Activated CD8-positive, alpha-beta T cell treated with anti-CD3 and anti-CD28 coated beads for 36 hours (primary cell): ENCODE measurements at regions of chr7 and their contacts with region 1.

Region 1: GRCh38 chr7:100705753-100706671 is at the start of gene POP7:
- DNase-seq: peak; percentile 100
- ATAC-seq: peak; percentile 96
- H3K4me3 Mint-ChIP-seq: peak within 1 kb of the TSS; percentile 97
- H3K27ac Mint-ChIP-seq: peak within 1 kb of the TSS; percentile 93
- H3K4me1 Mint-ChIP-seq: peaks cover 6% of the 10 kb centered on the region
- H3K27me3 Mint-ChIP-seq: no peaks in the 10 kb centered on the region
- CTCF ChIP-seq: no peak
- total RNA-seq, gene POP7: 47.4 to 48.1 TPM

Region 2: DNA sequence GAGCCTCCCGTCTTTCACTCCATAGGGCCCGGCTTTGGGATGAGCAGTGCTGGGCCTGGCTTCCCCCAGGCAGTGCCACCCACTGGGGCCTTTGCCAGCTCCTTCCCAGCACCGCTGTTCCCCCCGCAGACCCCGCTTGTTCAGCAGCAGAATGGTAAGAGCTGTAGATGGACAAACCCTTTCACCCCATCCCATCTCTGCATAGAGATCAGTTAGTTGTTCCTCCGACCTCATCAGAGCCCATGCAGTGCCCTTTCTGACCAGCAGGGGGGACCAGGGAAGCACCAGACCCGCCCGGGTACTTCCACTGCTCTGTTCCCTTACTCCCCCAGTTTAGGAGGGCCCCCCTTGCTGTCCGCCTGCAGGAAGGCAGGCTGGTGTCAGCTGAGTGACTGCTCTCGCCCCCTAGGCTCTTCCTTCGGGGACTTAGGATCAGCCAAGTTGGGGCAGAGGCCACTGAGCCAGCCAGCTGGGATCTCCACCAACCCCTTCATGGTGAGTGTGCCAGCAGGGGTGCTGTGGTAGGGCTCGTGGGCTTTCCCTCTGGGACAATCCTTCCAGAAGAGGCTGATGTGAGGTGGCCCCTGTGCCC is 142.1 kb before region 1 on chr7:
- CTCF ChIA-PET with region 1: interaction called, 12 read pairs
- POLR2A ChIA-PET with region 1: interaction called, 3 read pairs
- intact Hi-C with region 1: no loop called
- DNase-seq: peak; percentile 92
- ATAC-seq: peak; percentile 76
- H3K4me3 Mint-ChIP-seq: no peak overlapping the region
- H3K27ac Mint-ChIP-seq: no peak overlapping the region
- H3K4me1 Mint-ChIP-seq: peaks cover 26% of the 10 kb centered on the region
- H3K27me3 Mint-ChIP-seq: no peaks in the 10 kb centered on the region
- CTCF ChIP-seq: peak; percentile 95

Region 3: DNA sequence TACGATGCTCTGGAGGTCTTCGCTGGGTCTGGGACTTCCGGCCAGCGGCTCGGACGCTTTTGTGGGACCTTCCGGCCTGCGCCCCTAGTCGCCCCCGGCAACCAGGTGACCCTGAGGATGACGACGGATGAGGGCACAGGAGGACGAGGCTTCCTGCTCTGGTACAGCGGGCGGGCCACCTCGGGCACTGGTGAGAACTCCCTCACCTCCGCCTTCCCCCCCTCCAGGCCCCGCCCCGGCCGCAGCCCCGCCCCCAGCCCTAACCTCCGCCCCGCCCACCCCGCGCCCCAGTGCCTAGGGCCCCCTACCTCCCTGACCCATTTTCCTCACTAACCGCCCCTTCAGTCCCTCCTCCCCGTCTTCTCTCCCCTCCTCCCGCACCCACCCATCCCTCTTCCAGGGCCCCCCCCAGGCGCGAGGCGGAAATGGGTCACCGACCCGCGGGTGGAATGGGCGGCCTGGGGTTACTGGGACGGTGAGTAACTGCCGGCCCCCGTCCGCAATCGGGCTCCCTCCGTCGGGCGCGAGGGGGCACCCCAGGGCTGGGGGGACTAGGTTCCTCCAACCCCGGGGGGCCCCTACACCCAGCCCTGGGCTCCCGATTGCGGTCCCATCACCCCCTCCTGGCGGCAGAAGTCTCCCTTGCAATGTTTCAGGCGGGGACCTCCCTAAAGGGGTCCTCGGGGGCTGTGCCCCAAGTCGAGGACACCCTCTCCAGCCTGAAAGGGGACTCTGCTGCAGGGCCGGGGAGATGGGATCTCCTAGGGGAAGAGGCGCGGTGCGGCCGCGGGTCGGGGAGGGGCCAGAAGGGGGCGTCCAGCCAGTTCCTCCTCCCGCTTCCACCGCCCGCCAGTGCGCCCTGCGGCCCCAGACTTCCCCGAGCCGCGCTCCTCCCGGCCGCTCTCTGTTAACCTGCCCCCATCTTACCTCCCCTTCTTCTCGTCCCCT is 101.7 kb before region 1 on chr7:
- CTCF ChIA-PET with region 1: interaction called, 13 read pairs
- POLR2A ChIA-PET with region 1: interaction called, 3 read pairs
- intact Hi-C with region 1: no loop called
- DNase-seq: peak; percentile 87
- ATAC-seq: peak; percentile 81
- H3K4me3 Mint-ChIP-seq: peak overlapping the region; percentile 78
- H3K27ac Mint-ChIP-seq: peak overlapping the region; percentile 82
- H3K4me1 Mint-ChIP-seq: peaks cover 19% of the 10 kb centered on the region
- H3K27me3 Mint-ChIP-seq: peaks cover 3% of the 10 kb centered on the region
- CTCF ChIP-seq: peak; percentile 72

Region 4: DNA sequence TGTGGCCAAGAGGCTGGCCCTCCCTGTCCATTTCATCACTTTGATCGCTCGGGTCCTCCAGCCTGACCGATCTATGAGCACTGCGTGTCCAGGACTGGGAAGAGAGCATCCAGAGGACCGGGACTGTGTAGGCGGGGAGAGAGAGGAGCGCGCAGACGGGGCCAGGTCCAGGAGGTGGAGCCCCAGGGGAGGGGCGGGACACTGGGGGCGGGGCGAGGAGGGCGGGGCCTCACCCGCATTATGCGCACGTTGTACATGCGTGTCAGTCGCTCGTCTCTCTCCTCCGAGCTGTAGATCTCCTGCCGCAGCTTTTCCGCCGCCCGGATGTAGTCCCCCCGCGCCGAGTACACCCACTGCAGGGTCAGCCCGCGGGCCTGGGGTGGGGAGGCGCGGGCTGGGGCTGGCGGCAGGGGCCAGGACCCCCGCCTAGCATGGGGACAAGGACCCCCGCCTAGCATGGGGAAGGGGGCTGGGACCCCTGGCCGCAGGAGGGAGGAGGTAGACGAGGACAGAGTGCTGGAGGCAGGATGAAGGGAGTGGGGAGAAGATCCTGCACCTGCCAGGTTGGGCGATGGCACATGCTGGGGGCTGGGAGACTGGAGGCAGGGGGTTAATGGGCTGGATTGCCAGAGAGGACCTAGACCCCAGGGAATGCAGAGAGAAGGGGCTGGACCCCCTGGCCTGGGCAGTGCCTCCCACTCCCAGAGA is 79.3 kb before region 1 on chr7:
- CTCF ChIA-PET with region 1: interaction called, 16 read pairs
- POLR2A ChIA-PET with region 1: no interaction called
- intact Hi-C with region 1: no loop called
- DNase-seq: peak; percentile 93
- ATAC-seq: peak; percentile 97
- H3K4me3 Mint-ChIP-seq: peak overlapping the region; percentile 72
- H3K27ac Mint-ChIP-seq: peak overlapping the region; percentile 81
- H3K4me1 Mint-ChIP-seq: peaks cover 23% of the 10 kb centered on the region
- H3K27me3 Mint-ChIP-seq: no peaks in the 10 kb centered on the region
- CTCF ChIP-seq: no peak

Region 5: DNA sequence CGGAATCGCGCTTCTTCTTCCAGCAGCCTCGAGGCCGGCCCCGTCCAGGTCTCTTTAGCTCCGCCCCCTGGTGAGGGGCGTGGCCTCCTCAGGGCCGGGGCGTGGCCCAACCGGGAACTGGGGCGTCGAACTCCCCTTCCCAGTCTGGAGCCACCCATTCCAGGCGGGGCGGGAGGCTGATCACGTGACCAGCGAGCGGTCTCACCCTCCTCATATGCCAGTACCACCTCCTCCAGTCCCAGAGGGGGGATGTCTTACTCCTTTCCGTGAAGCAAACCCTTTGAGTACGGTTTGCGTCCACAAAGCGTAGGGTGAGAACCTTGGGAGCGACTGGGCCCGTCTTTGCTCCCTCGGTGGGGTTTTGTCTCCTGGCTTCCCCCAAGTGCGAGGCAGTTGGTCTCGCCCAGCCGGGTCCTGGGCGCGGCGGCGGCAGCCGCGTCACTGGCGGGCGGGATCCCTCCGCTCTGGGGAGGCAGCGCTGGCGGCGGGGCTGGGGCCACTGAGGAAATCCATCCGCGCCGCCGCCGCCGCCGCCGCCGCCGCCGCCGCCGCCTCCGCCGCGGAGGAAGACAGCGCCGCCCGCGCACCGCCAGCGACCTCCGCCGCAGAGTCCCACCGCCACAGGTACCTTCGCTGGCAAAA is 32.6 kb before region 1 on chr7 and contains the start of gene GNB2:
- CTCF ChIA-PET with region 1: interaction called, 10 read pairs
- POLR2A ChIA-PET with region 1: interaction called, 5 read pairs
- intact Hi-C with region 1: no loop called
- DNase-seq: peak; percentile 99
- ATAC-seq: peak; percentile 75
- H3K4me3 Mint-ChIP-seq: peak within 1 kb of the TSS; percentile 94
- H3K27ac Mint-ChIP-seq: peak within 1 kb of the TSS; percentile 95
- H3K4me1 Mint-ChIP-seq: peaks cover 11% of the 10 kb centered on the region
- H3K27me3 Mint-ChIP-seq: no peaks in the 10 kb centered on the region
- CTCF ChIP-seq: no peak
- total RNA-seq, gene GNB2: 192 TPM

Region 6: GRCh38 chr7:100719523-100720319 is 13.7 kb after region 1 on chr7:
- CTCF ChIA-PET with region 1: interaction called, 71 read pairs
- POLR2A ChIA-PET with region 1: interaction called, 6 read pairs
- intact Hi-C with region 1: no loop called
- DNase-seq: no peak
- ATAC-seq: no peak
- H3K4me3 Mint-ChIP-seq: no peak overlapping the region
- H3K27ac Mint-ChIP-seq: no peak overlapping the region
- H3K4me1 Mint-ChIP-seq: no peaks in the 10 kb centered on the region
- H3K27me3 Mint-ChIP-seq: peaks cover 42% of the 10 kb centered on the region
- CTCF ChIP-seq: no peak